Tibial artery (tissue), 4 donors: ENCODE measurements at regions of chr3 and their contacts with region 1.

Region 1: GRCh38 chr3:123546133-123546755 is 38.6 kb downstream of the HACD2 start:
- DNase-seq: no peak
- H3K4me3 ChIP-seq: no peak overlapping the region
- H3K27ac ChIP-seq: no peak overlapping the region
- H3K4me1 ChIP-seq: no peaks in the 10 kb centered on the region
- H3K27me3 ChIP-seq: no peaks in the 10 kb centered on the region
- CTCF ChIP-seq: no peak

Region 2: DNA sequence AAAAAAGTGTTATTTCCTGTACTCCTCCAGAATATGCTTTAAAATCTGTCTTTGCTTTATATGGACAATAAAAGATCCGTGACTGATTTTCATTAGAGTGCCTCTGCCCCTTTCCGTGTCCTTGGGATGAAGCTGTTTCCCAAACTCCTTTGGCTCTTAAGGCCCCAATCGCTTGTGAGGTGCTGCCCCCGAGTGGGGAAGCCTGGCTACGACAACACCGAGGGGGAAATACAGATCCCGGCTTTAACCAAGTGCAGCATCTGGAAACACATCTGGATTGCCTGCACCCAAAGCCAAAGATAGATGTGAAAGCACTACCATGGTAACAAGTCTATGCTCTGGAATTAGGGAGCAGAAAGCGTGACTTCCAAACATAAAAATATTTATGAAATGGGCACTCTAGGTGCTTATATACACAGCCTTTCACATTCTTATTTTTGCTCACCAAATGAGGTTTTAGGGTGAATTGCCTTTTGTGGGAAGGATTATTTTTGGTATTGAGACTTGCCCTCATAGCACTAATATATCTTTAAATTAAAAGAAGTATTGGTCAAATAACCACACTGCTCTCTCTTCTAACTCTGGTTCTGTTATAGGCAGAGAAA is 56.7 kb before region 1 on chr3:
- intact Hi-C with region 1: loop called (anchors 10 kb)
- DNase-seq: peak; percentile 78 to 87
- H3K4me3 ChIP-seq: peak overlapping the region in 1 of 2 donors; percentile 28
- H3K27ac ChIP-seq: peak overlapping the region; percentile 40 to 84
- H3K4me1 ChIP-seq: peaks cover 0 to 32% (median 11%) of the 10 kb centered on the region in 4 donors
- H3K27me3 ChIP-seq: no peaks in the 10 kb centered on the region
- CTCF ChIP-seq: peak; percentile 86 to 92